Tibial artery (tissue), 4 donors: ENCODE measurements at regions of chr13 and their contacts with region 1.

Region 1: GRCh38 chr13:112643759-112644459 is 45.9 kb upstream of the ATP11A start:
- DNase-seq: no peak
- H3K4me3 ChIP-seq: no peak overlapping the region
- H3K27ac ChIP-seq: no peak overlapping the region
- H3K4me1 ChIP-seq: no peaks in the 10 kb centered on the region
- H3K27me3 ChIP-seq: peaks cover 0 to 36% of the 10 kb centered on the region in 2 donors
- CTCF ChIP-seq: no peak

Region 2: GRCh38 chr13:112873851-112874750 is 230.2 kb after region 1 on chr13:
- intact Hi-C with region 1: loop called (anchors 5 kb)
- DNase-seq: peak; percentile 78 to 82
- H3K4me3 ChIP-seq: peak overlapping the region in 1 of 2 donors; percentile 19
- H3K27ac ChIP-seq: no peak overlapping the region
- H3K4me1 ChIP-seq: peaks cover 0 to 8% (median 4%) of the 10 kb centered on the region in 4 donors
- H3K27me3 ChIP-seq: no peaks in the 10 kb centered on the region
- CTCF ChIP-seq: peak; percentile 85 to 91